Activated naive CD4-positive, alpha-beta T cell treated with anti-CD3 and anti-CD28 coated beads, Interleukin-2, amount 10 ng/mL, durations not matched to agents 7 days and 5 days (primary cell): ENCODE measurements at regions of chr5 and their contacts with region 1.

Region 1: GRCh38 chr5:179679014-179679674 is 1.7 kb downstream of the CBY3 start:
- DNase-seq: peak; percentile 77
- H3K4me3 Mint-ChIP-seq: peak overlapping the region; percentile 99
- H3K27ac Mint-ChIP-seq: peak overlapping the region; percentile 97
- H3K4me1 Mint-ChIP-seq: peaks cover 45% of the 10 kb centered on the region
- H3K27me3 Mint-ChIP-seq: no peaks in the 10 kb centered on the region

Region 2: DNA sequence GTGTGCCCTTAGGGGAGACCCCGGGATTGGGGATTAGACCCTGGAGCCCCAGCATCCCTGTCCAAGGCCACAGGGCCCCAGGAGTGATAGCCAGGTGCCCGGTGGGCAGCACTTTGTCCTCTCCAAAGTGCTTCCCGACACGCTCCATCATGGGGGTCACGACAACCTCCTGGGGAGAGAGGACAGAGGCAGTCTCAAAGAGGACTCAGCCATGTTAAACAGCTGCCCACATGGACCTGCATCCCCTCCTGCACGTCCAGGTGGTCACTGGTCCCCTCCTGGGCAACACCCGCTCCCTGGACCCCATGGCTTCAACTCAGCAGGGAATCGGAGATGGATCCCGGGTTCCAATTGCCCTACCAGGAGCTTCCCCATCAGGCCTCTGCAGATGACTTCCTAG is 35.6 kb before region 1 on chr5:
- CTCF ChIA-PET with region 1: no interaction called
- DNase-seq: no peak
- H3K4me3 Mint-ChIP-seq: no peak overlapping the region
- H3K27ac Mint-ChIP-seq: no peak overlapping the region
- H3K4me1 Mint-ChIP-seq: no peaks in the 10 kb centered on the region
- H3K27me3 Mint-ChIP-seq: peaks cover 25% of the 10 kb centered on the region

Region 3: GRCh38 chr5:179697993-179698934 is 19.1 kb after region 1 on chr5:
- CTCF ChIA-PET with region 1: interaction called, 10 read pairs
- DNase-seq: peak; percentile 99
- H3K4me3 Mint-ChIP-seq: peak overlapping the region; percentile 91
- H3K27ac Mint-ChIP-seq: peak overlapping the region; percentile 98
- H3K4me1 Mint-ChIP-seq: peaks cover 42% of the 10 kb centered on the region
- H3K27me3 Mint-ChIP-seq: no peaks in the 10 kb centered on the region